ENCODE measurements at regions of chr14 and their contacts with region 1.

Region 1: DNA sequence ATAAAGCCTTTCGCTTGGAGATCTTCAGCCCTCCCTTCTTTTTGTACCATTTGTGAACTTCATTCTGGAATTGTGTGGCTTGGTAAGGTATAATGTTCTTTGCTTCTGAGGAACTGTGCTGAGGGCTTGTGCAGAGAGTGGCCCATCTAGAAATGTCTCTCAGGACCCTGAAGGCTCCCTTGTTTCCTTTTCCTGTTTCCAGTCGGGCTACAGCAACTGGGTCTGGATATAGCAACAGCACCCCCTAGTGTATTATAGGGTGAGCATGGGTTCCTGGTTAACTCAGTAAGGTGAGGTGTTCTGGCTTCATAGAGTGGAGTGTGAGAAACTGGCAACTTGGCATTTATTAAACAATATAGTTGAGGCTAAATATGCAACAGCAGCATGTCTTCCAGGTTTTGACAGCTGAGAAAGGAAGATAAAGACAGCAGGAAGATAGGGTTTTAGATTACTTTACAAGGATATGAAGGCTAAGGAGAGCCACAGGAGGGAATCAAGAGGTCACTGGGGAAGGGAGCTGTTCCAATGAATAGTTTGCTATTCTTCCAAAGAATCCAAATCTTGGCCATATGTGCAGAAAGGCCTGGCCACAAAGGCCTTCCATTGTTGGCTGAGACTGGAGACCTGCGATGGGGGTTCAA is 49.1 kb upstream of the RNU6-8 start:
- DNase-seq: peak; percentile 85
- H3K4me3 ChIP-seq: no peak overlapping the region
- H3K27ac ChIP-seq: no peak overlapping the region
- H3K4me1 ChIP-seq: no peaks in the 10 kb centered on the region
- H3K27me3 ChIP-seq: no peaks in the 10 kb centered on the region
- CTCF ChIP-seq: peak; percentile 90

Region 2: GRCh38 chr14:31360919-31361662 is 891.1 kb before region 1 on chr14:
- CTCF ChIA-PET with region 1: no interaction called
- POLR2A ChIA-PET with region 1: no interaction called
- intact Hi-C with region 1: loop called (anchors 10 kb)
- DNase-seq: peak; percentile 19
- H3K4me3 ChIP-seq: no peak overlapping the region
- H3K27ac ChIP-seq: no peak overlapping the region
- H3K4me1 ChIP-seq: no peaks in the 10 kb centered on the region
- H3K27me3 ChIP-seq: no peaks in the 10 kb centered on the region
- CTCF ChIP-seq: no peak

Region 3: DNA sequence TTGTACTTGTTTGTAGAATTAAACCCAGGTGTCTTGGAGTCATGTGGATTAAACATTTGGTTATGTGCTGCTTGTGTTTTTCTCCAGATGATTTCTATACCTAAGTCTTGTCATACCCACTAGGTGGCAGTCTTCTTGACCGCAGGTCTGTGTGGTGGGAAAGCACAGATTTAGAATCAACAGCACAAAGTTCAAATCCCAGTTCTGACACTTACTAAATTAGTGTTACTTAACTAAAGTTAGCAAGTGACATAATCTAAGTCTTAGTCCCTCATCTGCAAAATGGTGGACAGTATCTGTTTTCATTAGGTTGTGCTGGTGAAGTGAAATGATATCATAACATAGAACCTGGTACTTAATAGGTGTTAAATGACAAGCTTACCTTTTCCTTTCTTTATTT is 326.0 kb before region 1 on chr14:
- CTCF ChIA-PET with region 1: interaction called, 4 read pairs
- POLR2A ChIA-PET with region 1: no interaction called
- intact Hi-C with region 1: loop called (anchors 2 kb)
- DNase-seq: peak; percentile 63
- H3K4me3 ChIP-seq: no peak overlapping the region
- H3K27ac ChIP-seq: no peak overlapping the region
- H3K4me1 ChIP-seq: peaks cover 11% of the 10 kb centered on the region
- H3K27me3 ChIP-seq: no peaks in the 10 kb centered on the region
- CTCF ChIP-seq: peak; percentile 73

Region 4: GRCh38 chr14:31968956-31969698 is 283.0 kb before region 1 on chr14:
- CTCF ChIA-PET with region 1: interaction called, 9 read pairs
- POLR2A ChIA-PET with region 1: interaction called, 13 read pairs
- intact Hi-C with region 1: no loop called
- DNase-seq: no peak
- H3K4me3 ChIP-seq: no peak overlapping the region
- H3K27ac ChIP-seq: no peak overlapping the region
- H3K4me1 ChIP-seq: no peaks in the 10 kb centered on the region
- H3K27me3 ChIP-seq: no peaks in the 10 kb centered on the region
- CTCF ChIP-seq: no peak

Region 5: DNA sequence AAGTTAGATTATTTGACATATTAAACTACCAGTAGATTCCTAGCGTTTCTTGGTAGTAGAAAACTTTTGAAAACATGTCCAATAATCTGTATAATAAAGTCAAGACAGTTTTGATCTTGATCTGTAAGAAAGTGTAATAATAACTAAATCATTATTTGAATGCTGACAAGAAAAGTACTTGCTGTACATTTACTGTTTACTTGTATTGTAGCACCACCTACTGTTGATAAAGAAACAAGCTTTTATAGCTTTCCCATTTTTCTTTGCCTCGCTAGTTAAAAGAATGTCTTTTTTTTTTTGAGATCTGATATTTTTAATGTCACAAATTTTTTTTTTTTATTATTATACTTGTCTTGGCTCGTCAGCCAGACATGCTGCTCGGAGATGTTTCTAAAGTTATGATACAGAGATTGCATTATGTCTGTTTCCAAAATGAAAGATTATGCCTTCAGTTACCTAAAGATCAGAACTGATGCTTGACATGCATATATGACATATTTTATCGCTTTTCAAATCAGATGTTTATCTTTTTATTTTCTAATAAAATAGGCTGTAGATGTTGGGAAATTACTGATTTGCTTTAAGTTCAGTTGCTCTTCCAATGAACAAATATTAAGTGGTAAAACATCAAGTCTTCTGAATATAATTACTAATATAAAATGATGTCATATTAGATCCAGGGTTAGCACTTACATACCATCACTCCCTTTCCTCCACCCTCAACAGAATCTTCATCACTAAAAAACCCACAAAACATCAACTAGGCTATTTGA is 217.4 kb after region 1 on chr14:
- CTCF ChIA-PET with region 1: interaction called, 12 read pairs
- POLR2A ChIA-PET with region 1: no interaction called
- intact Hi-C with region 1: loop called (anchors 5 kb)
- DNase-seq: peak; percentile 57
- H3K4me3 ChIP-seq: no peak overlapping the region
- H3K27ac ChIP-seq: no peak overlapping the region
- H3K4me1 ChIP-seq: peaks cover 11% of the 10 kb centered on the region
- H3K27me3 ChIP-seq: no peaks in the 10 kb centered on the region
- CTCF ChIP-seq: peak; percentile 69